OCI-LY7 (cell line): ENCODE measurements at regions of chr3 and their contacts with region 1.

Region 1: GRCh38 chr3:184874709-184875644 is 63.0 kb downstream of the VPS8 start:
- DNase-seq: peak; percentile 45
- H3K4me3 ChIP-seq: no peak overlapping the region
- H3K27ac ChIP-seq: no peak overlapping the region
- H3K4me1 ChIP-seq: no peaks in the 10 kb centered on the region
- CTCF ChIP-seq: peak; percentile 84

Region 2: GRCh38 chr3:185070491-185071286 is 195.7 kb after region 1 on chr3:
- CTCF ChIA-PET with region 1: no interaction called
- POLR2A ChIA-PET with region 1: no interaction called
- intact Hi-C with region 1: loop called (anchors 10 kb)
- DNase-seq: no peak
- H3K4me3 ChIP-seq: no peak overlapping the region
- H3K27ac ChIP-seq: no peak overlapping the region
- H3K4me1 ChIP-seq: no peaks in the 10 kb centered on the region
- CTCF ChIP-seq: no peak

Region 3: GRCh38 chr3:185176750-185177359 is 301.9 kb after region 1 on chr3:
- CTCF ChIA-PET with region 1: no interaction called
- POLR2A ChIA-PET with region 1: no interaction called
- intact Hi-C with region 1: loop called (anchors 1 kb)
- DNase-seq: peak; percentile 38
- H3K4me3 ChIP-seq: no peak overlapping the region
- H3K27ac ChIP-seq: no peak overlapping the region
- H3K4me1 ChIP-seq: no peaks in the 10 kb centered on the region
- CTCF ChIP-seq: peak; percentile 96